ENCODE measurements at regions of chr2 and their contacts with region 1.

Region 1: DNA sequence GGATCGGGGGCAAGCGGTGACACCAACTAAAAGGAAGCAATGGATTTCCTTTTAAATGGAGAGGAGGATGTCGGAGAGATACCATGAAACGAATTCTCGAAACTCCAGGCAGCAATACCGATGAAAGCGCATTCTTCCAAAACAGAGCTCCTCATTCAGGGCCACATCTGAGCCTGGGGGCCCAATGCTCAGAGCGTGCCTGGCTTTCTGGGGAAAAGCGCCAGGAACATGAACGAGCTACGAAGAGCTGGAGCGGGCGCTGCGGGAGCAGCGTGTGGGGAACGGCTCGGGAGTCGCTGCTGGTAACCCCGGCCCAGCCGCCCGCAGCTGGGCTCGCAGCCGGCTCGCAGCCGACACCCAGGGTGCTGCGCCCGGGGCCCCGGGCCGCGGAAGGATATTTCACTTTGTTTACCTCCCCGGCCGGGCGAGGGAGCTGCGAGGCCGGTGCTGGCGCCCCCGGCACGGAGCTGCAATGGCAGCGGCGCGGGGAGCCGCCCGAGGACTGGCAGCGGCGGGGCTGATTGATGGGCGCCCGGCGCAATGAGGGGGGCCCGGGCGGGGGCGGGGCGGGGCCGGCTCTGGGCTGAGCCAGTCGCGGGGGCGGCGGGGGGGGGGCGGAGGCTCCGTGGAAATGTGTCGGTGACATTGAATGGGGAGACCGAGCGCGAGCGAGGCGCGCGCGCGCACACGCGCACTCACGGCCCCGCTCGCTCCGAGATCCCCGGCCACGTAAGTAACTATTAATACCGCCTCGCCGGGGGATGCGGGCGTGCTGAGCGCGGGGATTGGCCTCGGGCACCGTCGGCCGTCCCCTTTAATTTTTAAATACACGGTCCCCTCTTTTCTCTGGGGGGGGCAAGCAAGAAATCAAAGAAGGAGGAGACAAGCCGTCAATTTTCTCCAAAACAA is at the start of gene TRIB2:
- DNase-seq: peak; percentile 69 to 95
- H3K4me3 ChIP-seq: peak within 1 kb of the TSS; percentile 80 to 91
- H3K27ac ChIP-seq: peak within 1 kb of the TSS; percentile 92 to 95
- H3K4me1 ChIP-seq: peaks cover 12 to 25% of the 10 kb centered on the region in 2 donors
- H3K27me3 ChIP-seq: no peaks in the 10 kb centered on the region
- CTCF ChIP-seq: peak in 1 of 3 experiments; percentile 3
- total RNA-seq, gene TRIB2: 55.6 TPM

Region 2: GRCh38 chr2:11743846-11744553 is 972.5 kb before region 1 on chr2:
- intact Hi-C with region 1: loop called (anchors 10 kb)
- DNase-seq: peak; percentile 94 to 99
- H3K4me3 ChIP-seq: peak overlapping the region; percentile 29 to 47
- H3K27ac ChIP-seq: peak overlapping the region; percentile 53 to 64
- H3K4me1 ChIP-seq: peaks cover 4 to 30% of the 10 kb centered on the region in 2 donors
- H3K27me3 ChIP-seq: no peaks in the 10 kb centered on the region
- CTCF ChIP-seq: peak in 1 of 3 experiments; percentile 3

Region 3: DNA sequence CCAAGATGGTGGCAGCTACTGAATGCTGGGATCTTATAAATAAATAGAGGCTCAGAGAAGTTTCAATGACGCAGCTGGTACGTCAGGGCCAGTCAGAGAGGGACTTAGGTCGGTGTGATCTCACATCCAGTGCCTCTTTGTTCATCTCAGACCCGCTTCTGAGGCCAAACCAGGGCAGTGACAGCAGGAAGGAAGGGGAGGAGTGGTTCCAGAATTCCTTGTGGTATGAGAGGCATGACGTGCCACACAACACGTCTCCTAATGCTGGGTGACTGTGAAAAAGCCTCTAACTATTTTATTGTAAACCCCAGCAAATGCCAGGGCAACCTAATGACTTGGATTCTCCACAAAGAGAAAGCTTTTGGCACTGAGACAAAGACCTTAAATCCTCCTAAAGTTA is 546.8 kb before region 1 on chr2:
- intact Hi-C with region 1: loop called (anchors 5 kb)
- DNase-seq: peak; percentile 58 to 84
- H3K4me3 ChIP-seq: no peak overlapping the region
- H3K27ac ChIP-seq: peak overlapping the region; percentile 53 to 65
- H3K4me1 ChIP-seq: peaks cover 4 to 8% of the 10 kb centered on the region in 2 donors
- H3K27me3 ChIP-seq: no peaks in the 10 kb centered on the region
- CTCF ChIP-seq: no peak

Region 4: DNA sequence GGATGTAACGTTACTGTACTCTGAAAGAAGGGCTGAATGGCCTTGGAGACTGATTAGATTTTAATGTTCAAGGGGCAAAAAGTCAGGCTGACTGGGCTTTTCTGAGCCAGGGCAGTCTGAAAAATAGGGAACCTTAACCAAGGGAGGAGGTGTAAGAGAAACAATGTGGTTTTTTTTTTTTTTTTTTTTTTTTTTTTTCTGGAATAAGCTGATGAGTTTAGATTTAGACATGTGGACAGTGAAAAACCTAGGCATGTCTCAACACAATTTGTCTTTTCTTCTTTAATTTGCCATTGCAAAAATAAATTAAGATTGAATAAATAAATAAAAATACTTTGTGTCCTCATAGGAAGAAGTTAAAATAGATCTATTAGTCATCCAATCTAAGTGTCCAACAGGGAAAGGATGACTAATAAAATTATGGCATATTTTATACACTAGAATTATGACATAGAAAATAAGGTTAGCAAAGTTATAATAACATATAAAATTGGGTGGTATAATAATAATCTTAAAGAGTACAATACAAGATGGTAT is 237.4 kb before region 1 on chr2:
- intact Hi-C with region 1: loop called (anchors 5 kb)
- DNase-seq: no peak
- H3K4me3 ChIP-seq: no peak overlapping the region
- H3K27ac ChIP-seq: peak overlapping the region; percentile 35 to 41
- H3K4me1 ChIP-seq: peaks cover 0 to 12% of the 10 kb centered on the region in 2 donors
- H3K27me3 ChIP-seq: no peaks in the 10 kb centered on the region
- CTCF ChIP-seq: no peak

Region 5: GRCh38 chr2:12684471-12684936 is 32.0 kb before region 1 on chr2:
- intact Hi-C with region 1: loop called (anchors 2 kb)
- DNase-seq: no peak
- H3K4me3 ChIP-seq: no peak overlapping the region
- H3K27ac ChIP-seq: peak overlapping the region; percentile 13 to 43
- H3K4me1 ChIP-seq: peaks cover 4 to 7% of the 10 kb centered on the region in 2 donors
- H3K27me3 ChIP-seq: no peaks in the 10 kb centered on the region
- CTCF ChIP-seq: no peak

Region 6: DNA sequence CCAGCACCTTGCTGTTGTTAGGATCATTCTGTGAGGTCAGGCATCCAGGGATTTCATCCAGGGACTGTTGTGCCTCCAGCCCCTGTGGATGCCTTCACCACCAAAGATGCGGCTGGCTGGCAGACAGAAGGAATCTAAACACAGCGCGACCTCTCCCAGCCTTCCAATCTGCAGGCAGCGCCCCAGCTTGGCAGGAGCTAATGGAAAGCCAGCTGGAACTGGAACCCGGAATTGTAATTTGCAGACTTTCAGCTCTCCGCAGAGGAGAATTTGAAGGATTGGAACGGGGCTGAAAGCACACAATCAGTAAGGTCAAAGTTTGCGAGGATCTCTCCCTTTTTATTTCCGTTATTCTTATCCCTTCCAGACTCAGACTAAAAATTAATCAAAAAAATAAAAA is 128.0 kb after region 1 on chr2:
- intact Hi-C with region 1: no loop called
- DNase-seq: no peak
- H3K4me3 ChIP-seq: no peak overlapping the region
- H3K27ac ChIP-seq: no peak overlapping the region
- H3K4me1 ChIP-seq: no peaks in the 10 kb centered on the region
- H3K27me3 ChIP-seq: no peaks in the 10 kb centered on the region
- CTCF ChIP-seq: no peak

Region 7: GRCh38 chr2:12931186-12931844 is 214.8 kb after region 1 on chr2:
- intact Hi-C with region 1: loop called (anchors 2 kb)
- DNase-seq: no peak
- H3K4me3 ChIP-seq: no peak overlapping the region
- H3K27ac ChIP-seq: no peak overlapping the region
- H3K4me1 ChIP-seq: no peaks in the 10 kb centered on the region
- H3K27me3 ChIP-seq: no peaks in the 10 kb centered on the region
- CTCF ChIP-seq: peak; percentile 65 to 94 (median 83)

Region 8: GRCh38 chr2:12970861-12971260 is 254.3 kb after region 1 on chr2:
- intact Hi-C with region 1: no loop called
- DNase-seq: no peak
- H3K4me3 ChIP-seq: no peak overlapping the region
- H3K27ac ChIP-seq: no peak overlapping the region
- H3K4me1 ChIP-seq: no peaks in the 10 kb centered on the region
- H3K27me3 ChIP-seq: no peaks in the 10 kb centered on the region
- CTCF ChIP-seq: no peak